HCT116 (cell line): ENCODE measurements at regions of chr6 and their contacts with region 1.

Region 1: DNA sequence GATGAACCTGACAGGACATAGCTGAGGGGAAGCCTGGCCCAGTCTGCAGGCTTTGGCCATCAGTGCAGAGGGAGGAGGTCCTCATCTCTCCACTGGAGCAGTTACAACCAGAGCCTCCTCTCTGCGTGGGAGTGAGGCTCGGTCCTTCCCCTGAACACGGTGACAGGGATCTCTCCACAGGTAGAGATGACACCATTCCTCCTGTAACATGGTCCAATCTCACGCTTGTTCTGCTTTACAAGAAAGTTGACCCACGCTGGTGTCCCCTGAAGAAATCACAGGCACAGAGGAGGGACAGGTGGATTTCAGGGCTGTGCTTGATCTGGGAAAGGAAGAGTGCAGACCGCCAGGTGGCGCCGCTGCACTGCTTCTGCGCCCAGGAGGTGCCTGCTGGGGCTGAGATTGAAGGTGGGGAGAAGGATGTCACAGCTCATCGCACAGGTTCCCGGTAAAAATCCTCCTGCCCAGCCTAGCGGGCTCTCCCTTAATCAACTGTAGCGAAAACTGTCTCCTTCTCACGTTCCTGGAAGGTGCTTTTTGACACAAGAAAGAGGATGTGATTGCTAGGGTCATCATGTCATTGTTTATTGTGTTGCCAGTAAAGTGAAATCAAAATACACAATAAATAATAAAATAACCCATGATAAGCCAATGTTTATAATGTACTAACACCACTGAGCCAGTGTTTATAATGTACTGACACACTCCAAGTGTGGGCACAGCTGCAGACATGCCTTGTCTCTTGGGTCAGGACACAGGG is 20.4 kb downstream of the HLA-G start:
- DNase-seq: peak; percentile 63
- ATAC-seq: peak; percentile 96
- H3K4me3 ChIP-seq: no peak overlapping the region
- H3K27ac ChIP-seq: no peak overlapping the region
- H3K4me1 ChIP-seq: peaks cover 0 to 32% of the 10 kb centered on the region in 2 experiments; a peak in 2 of 4 replicates
- H3K27me3 ChIP-seq: no peaks in the 10 kb centered on the region
- CTCF ChIP-seq: peak; percentile 89 to 96 (median 95)
- POLR2A ChIP-seq: no peak
- RAD21 ChIP-seq: peak; percentile 100

Region 2: GRCh38 chr6:30013291-30013922 is 165.4 kb after region 1 on chr6:
- CTCF ChIA-PET with region 1: interaction called, 31 read pairs
- POLR2A ChIA-PET with region 1: no interaction called
- RAD21 ChIA-PET with region 1: interaction called in 1 of 2 experiments, 7 read pairs
- intact Hi-C with region 1: loop called (anchors 1 kb)
- DNase-seq: no peak
- ATAC-seq: peak; percentile 80
- H3K4me3 ChIP-seq: no peak overlapping the region
- H3K27ac ChIP-seq: no peak overlapping the region
- H3K4me1 ChIP-seq: no peaks in the 10 kb centered on the region
- H3K27me3 ChIP-seq: no peaks in the 10 kb centered on the region
- CTCF ChIP-seq: peak; percentile 77 to 91 (median 83); a peak in 5 of 6 replicates
- POLR2A ChIP-seq: no peak
- RAD21 ChIP-seq: peak; percentile 89

Region 3: DNA sequence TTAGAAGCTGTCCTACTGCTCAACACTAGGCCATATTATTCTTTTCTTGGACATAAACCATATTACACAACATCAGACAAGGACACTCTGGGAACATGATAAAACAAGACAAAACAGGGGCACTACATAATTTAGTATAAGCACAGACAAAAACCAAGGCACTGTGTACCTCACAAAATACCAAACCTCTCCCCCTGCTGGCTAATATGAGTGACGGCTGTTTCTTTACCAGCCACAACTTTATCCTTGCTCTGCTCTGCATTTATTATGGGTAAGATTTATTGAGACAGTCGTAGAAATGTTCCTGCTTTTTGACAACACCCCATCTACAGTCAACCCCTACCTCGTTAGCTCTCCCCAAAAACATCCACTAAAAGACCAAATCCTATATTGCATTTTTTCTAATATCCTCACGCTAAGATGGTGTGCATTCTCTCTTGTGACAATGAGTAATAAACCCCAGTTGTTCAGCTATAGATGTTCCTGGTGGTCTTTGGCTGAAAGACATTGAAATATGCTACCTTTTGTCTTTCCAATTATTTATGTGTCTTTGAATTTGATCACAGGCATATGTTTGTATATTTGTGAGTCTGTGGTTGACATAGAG is 189.2 kb after region 1 on chr6:
- CTCF ChIA-PET with region 1: interaction called, 10 read pairs
- POLR2A ChIA-PET with region 1: no interaction called
- RAD21 ChIA-PET with region 1: no interaction called
- intact Hi-C with region 1: no loop called
- DNase-seq: no peak
- ATAC-seq: peak; percentile 93
- H3K4me3 ChIP-seq: no peak overlapping the region
- H3K27ac ChIP-seq: no peak overlapping the region
- H3K4me1 ChIP-seq: no peaks in the 10 kb centered on the region
- H3K27me3 ChIP-seq: no peaks in the 10 kb centered on the region
- CTCF ChIP-seq: peak; percentile 40 to 71 (median 63); a peak in 5 of 6 replicates
- POLR2A ChIP-seq: no peak
- RAD21 ChIP-seq: peak; percentile 36

Region 4: DNA sequence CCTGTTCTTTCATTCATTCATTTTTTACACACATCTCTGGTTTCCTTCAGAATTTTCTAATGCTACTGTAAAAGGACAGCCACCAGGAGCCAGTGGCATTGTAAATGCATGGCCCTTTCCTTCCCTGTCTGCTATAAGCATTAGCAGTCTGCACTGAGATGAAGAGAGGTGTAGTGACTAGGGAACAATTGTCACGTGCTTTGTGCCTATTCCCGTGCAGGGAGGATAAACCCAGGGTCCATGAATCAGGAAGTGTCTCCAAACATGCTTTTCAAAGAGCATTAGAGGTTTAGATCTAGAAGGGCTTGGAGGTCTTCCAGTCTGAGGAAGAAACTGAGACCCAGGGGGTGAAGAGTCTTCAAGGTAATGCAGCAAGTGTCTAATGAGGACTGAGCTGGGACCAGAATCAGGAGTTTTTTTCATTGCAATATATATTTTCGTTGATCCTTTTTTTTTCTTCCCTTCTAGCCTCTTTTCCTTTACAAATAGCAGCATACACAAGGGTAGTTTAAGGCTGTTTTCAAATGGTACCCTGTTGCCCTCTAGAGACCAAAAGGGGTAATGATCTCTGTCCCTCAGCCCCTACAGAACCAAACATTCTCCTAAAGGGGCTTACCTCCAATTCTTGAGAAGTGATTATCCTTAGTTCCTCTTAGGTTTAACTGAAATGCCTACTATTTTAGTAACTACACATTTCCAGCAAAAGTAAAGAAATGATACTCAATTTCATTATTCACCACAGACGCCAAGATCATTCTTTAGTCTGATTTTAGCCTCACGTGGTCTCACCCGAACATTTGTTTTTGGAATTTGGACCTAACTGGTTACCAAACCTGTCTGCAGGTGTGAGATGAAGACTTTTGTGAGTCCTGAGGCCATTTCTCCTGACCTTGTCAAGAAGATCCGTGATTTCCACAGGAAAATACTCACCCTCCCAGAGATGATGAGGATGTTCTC is 321.9 kb after region 1 on chr6:
- CTCF ChIA-PET with region 1: no interaction called
- POLR2A ChIA-PET with region 1: no interaction called
- RAD21 ChIA-PET with region 1: no interaction called
- intact Hi-C with region 1: loop called (anchors 1 kb)
- DNase-seq: peak; percentile 51
- ATAC-seq: peak; percentile 99
- H3K4me3 ChIP-seq: no peak overlapping the region
- H3K27ac ChIP-seq: no peak overlapping the region
- H3K4me1 ChIP-seq: no peaks in the 10 kb centered on the region
- H3K27me3 ChIP-seq: no peaks in the 10 kb centered on the region
- CTCF ChIP-seq: peak; percentile 83 to 89 (median 88)
- POLR2A ChIP-seq: no peak
- RAD21 ChIP-seq: peak; percentile 93